Activated CD4-positive, alpha-beta T cell treated with anti-CD3 and anti-CD28 coated beads, Interleukin-2, amount 10 ng/mL, durations not matched to agents 24 days and 14 days (primary cell): ENCODE measurements at regions of chr2 and their contacts with region 1.

Region 1: GRCh38 chr2:240586198-240586918 is at the start of gene CAPN10:
- DNase-seq: peak; percentile 99
- H3K4me3 Mint-ChIP-seq: peak within 1 kb of the TSS; percentile 95
- H3K27ac Mint-ChIP-seq: peak within 1 kb of the TSS; percentile 87
- H3K4me1 Mint-ChIP-seq: peaks cover 32% of the 10 kb centered on the region
- H3K27me3 Mint-ChIP-seq: no peaks in the 10 kb centered on the region
- total RNA-seq, gene CAPN10: 48.4 and 51.9 TPM in 2 replicates

Region 2: GRCh38 chr2:240560480-240561326 is 25.7 kb before region 1 on chr2:
- intact Hi-C with region 1: loop called (anchors 1 kb)
- DNase-seq: peak; percentile 100
- H3K4me3 Mint-ChIP-seq: peak overlapping the region; percentile 94
- H3K27ac Mint-ChIP-seq: peak overlapping the region; percentile 94
- H3K4me1 Mint-ChIP-seq: peaks cover 63% of the 10 kb centered on the region
- H3K27me3 Mint-ChIP-seq: no peaks in the 10 kb centered on the region

Region 3: GRCh38 chr2:240566203-240567136 is 19.9 kb before region 1 on chr2:
- intact Hi-C with region 1: loop called (anchors 1 kb)
- DNase-seq: peak; percentile 99
- H3K4me3 Mint-ChIP-seq: peak overlapping the region; percentile 98
- H3K27ac Mint-ChIP-seq: peak overlapping the region; percentile 99
- H3K4me1 Mint-ChIP-seq: peaks cover 63% of the 10 kb centered on the region
- H3K27me3 Mint-ChIP-seq: no peaks in the 10 kb centered on the region

Region 4: GRCh38 chr2:240614391-240614790 is 28.0 kb after region 1 on chr2:
- intact Hi-C with region 1: no loop called
- DNase-seq: no peak
- H3K4me3 Mint-ChIP-seq: no peak overlapping the region
- H3K27ac Mint-ChIP-seq: no peak overlapping the region
- H3K4me1 Mint-ChIP-seq: peaks cover 19% of the 10 kb centered on the region
- H3K27me3 Mint-ChIP-seq: no peaks in the 10 kb centered on the region

Region 5: GRCh38 chr2:240624950-240625621 is 38.7 kb after region 1 on chr2 and contains the start of gene GPR35:
- intact Hi-C with region 1: loop called (anchors 1 kb)
- DNase-seq: peak; percentile 91
- H3K4me3 Mint-ChIP-seq: peak within 1 kb of the TSS; percentile 82
- H3K27ac Mint-ChIP-seq: peak within 1 kb of the TSS; percentile 89
- H3K4me1 Mint-ChIP-seq: peaks cover 51% of the 10 kb centered on the region
- H3K27me3 Mint-ChIP-seq: no peaks in the 10 kb centered on the region
- total RNA-seq, gene GPR35: 7.1 and 8.7 TPM in 2 replicates

Region 6: GRCh38 chr2:240640939-240641338 is 54.6 kb after region 1 on chr2:
- intact Hi-C with region 1: no loop called
- DNase-seq: no peak
- H3K4me3 Mint-ChIP-seq: no peak overlapping the region
- H3K27ac Mint-ChIP-seq: no peak overlapping the region
- H3K4me1 Mint-ChIP-seq: peaks cover 1% of the 10 kb centered on the region
- H3K27me3 Mint-ChIP-seq: peaks cover 2% of the 10 kb centered on the region

Region 7: DNA sequence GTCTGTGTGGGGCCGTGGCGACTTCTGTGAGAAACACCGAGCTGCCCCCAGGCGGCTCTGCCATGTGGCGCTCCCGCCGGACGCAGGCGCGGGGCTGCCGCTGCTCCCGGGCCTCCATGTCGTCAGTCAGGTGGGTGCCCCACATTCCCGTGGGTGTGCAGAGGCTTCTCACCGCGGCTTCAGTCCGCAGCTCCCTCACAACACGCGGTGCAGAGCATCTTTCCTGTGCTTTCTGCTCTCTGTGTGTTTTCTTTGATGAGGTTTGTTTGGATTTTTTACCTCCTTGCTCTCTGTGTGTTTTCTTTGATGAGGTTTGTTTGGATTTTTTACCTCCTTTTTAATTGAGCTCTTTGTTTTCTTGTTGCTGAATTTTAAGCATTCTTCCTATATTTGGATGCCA is 118.3 kb after region 1 on chr2:
- intact Hi-C with region 1: loop called (anchors 10 kb)
- DNase-seq: peak; percentile 75
- H3K4me3 Mint-ChIP-seq: peak overlapping the region; percentile 33
- H3K27ac Mint-ChIP-seq: no peak overlapping the region
- H3K4me1 Mint-ChIP-seq: peaks cover 15% of the 10 kb centered on the region
- H3K27me3 Mint-ChIP-seq: peaks cover 38% of the 10 kb centered on the region

Region 8: DNA sequence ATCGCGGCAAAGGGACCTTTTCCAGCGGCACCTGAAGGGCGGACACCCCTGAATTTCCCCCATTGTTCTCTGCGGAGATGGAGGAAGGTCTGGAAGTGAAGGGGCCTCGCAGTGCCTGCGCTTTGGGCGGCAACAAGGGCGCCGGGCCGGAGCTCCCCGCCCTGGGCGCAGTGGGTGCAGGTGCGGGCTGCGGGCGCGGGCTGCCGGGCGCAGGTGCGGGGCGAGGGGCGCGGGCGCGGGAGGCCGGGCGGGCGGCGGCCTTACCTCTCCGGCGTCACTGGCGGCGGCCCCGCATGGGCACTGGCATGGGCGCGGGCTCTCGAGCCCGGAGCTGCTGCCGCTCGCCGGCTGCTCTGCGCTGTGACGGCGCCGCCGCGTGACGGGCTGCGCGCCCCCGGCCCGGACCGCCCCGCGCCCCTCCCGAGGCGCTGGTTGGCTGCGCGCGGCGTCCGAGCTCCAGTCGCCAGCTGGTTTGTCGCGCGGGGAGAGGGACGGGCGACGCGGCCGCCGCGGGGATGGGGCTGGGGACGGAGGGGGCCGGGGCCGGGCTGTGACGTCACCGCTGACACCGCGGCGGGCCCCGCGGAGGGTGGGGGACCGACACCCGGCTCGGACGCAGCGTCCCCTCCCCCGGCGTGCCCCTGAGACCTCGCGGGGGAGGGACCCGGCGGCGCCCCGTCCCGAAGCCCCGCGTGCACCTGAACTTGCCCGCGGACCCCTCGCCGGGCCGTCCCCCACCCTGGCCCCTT is 233.7 kb after region 1 on chr2 and contains the start of gene KIF1A:
- intact Hi-C with region 1: no loop called
- DNase-seq: no peak
- H3K4me3 Mint-ChIP-seq: peak within 1 kb of the TSS; percentile 56
- H3K27ac Mint-ChIP-seq: no peak within 1 kb of the TSS
- H3K4me1 Mint-ChIP-seq: peaks cover 5% of the 10 kb centered on the region
- H3K27me3 Mint-ChIP-seq: peaks cover 52% of the 10 kb centered on the region
- total RNA-seq, gene KIF1A: 0.37 and 0.47 TPM in 2 replicates